WTC11 (cell line): ENCODE measurements at regions of chr17 and their contacts with region 1.

Region 1: DNA sequence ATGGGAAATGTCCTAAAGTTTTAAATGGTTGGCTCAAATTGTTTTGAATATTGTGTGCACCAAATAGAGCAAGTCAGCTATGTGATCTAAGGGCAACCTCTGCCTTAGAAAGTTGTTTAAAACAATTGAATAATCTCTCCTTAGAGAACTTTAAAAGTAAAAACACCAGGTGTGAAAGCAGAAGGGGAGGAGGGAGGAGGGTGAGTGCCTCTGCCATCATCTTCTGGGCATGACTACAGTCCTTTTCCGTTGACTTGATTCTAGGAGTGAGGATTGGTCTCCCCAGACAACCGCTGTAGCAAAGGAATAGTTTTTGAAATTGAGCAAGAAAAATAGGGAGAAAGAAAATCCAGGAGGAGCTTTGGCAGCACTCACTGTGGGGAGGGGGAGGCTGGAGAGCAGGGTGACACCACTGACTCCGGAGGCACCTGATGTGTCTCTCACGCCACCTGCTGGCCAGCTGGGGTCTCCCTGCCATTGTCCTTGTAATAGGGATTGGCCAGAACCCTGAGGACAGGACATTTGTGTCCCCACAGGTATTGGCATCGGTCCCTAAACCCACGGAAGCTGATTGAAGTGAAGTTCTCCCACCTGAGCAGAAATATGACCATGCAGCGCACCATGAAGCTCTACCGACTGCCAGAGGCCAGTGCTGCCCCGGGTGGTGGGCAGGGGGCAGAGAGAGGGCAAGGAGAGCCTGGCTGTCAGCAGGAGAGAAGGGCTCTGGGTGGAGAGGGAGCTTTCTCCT is 33.3 kb downstream of the PLCD3 start:
- DNase-seq: peak; percentile 94
- ATAC-seq: peak; percentile 96
- H3K4me3 Mint-ChIP-seq: no peak overlapping the region
- H3K27ac Mint-ChIP-seq: peak overlapping the region; percentile 87
- H3K4me1 Mint-ChIP-seq: no peaks in the 10 kb centered on the region
- H3K27me3 Mint-ChIP-seq: no peaks in the 10 kb centered on the region
- CTCF ChIP-seq: peak; percentile 82

Region 2: DNA sequence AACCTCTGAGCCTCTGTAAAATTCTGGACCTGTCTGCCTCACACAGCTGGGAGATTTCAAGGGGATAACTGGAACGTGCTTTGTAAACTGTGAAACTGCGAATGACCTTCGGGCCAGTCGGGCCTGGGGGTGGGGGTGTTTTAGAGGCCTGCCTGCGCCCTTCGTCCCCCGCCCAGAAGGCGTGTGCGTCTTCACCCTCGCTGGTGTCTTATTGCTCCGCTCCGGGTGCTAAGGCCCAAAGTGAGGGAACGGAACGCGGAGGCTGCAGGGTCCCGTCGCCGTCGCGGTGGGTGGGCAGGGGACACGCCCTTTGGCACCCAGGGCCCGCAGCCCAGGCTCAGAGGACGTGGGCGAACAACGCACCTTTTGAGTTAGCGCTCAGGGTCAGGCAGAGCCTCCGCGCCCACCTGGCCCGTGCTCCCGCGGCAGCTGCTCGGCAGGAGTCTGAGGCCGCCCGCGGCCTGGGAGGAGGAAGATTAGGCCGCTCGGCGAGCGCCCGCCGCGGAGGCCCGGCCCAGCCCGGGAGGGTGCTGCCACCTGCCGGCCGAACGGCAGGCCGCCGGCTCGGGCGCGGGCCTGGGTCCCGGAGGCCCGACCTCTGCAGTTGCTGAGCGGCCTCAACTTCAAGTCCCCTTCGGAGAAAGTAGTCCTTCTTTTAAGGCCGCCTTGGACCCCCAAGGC is 77.3 kb before region 1 on chr17:
- CTCF ChIA-PET with region 1: interaction called, 18 read pairs
- POLR2A ChIA-PET with region 1: no interaction called
- DNase-seq: peak; percentile 72
- ATAC-seq: peak; percentile 62
- H3K4me3 Mint-ChIP-seq: peak overlapping the region; percentile 66
- H3K27ac Mint-ChIP-seq: no peak overlapping the region
- H3K4me1 Mint-ChIP-seq: peaks cover 28% of the 10 kb centered on the region
- H3K27me3 Mint-ChIP-seq: peaks cover 42% of the 10 kb centered on the region
- CTCF ChIP-seq: peak; percentile 85

Region 3: GRCh38 chr17:45087504-45087975 is 11.5 kb before region 1 on chr17:
- CTCF ChIA-PET with region 1: interaction called, 28 read pairs
- POLR2A ChIA-PET with region 1: no interaction called
- DNase-seq: no peak
- ATAC-seq: no peak
- H3K4me3 Mint-ChIP-seq: no peak overlapping the region
- H3K27ac Mint-ChIP-seq: no peak overlapping the region
- H3K4me1 Mint-ChIP-seq: peaks cover 7% of the 10 kb centered on the region
- H3K27me3 Mint-ChIP-seq: no peaks in the 10 kb centered on the region
- CTCF ChIP-seq: no peak

Region 4: DNA sequence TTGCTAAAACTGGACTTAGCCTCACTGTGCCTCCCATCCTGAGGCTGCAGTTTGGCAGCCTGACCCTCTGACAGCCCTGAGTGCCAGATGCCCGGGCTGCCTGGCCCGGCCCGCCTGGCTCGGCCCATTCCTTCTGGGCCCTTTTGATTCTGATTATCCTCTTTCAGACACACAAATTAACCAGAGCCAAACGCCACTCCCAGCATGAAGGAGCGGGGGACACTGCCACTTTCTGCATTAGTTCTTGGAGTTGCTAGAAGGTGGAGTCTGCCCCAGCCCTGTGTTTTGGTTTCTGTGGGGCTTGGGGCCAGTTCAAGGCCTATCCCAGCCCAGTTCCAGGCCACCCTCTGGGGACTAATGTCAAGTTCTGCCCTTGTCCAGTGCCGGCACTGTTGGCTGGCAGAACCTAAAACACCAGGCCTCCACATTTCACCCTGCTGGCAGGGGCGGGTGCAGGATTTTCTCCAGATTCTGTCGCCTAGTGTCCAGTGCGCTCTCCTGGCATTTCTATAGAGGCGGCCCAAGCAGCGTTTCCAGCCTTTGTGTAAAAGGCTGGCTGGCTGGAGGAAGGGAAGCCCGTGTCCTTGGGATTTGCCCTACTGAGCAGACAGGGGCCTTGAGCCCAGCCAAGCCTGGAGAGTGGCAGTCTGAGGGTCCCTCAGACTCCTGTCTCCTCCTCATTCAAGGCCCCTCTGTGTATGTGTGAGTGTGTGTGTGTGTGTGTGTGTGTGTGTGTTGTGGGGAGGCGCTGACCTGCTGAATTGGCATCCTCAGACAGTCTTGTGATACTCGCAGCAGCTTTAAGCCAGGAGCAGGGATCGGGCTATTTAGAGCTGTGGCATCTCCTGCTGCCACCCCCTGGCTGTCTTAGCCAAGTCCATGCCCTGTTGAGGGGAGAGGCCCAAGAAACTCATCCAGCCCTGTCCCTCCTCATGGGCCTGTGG is 11.9 kb after region 1 on chr17:
- CTCF ChIA-PET with region 1: interaction called, 25 read pairs
- POLR2A ChIA-PET with region 1: interaction called, 3 read pairs
- DNase-seq: no peak
- ATAC-seq: 0 out of 2 replicates have a peak, but pooled peaks have one; percentile 11
- H3K4me3 Mint-ChIP-seq: no peak overlapping the region
- H3K27ac Mint-ChIP-seq: peak overlapping the region; percentile 63
- H3K4me1 Mint-ChIP-seq: peaks cover 8% of the 10 kb centered on the region
- H3K27me3 Mint-ChIP-seq: no peaks in the 10 kb centered on the region
- CTCF ChIP-seq: no peak

Region 5: DNA sequence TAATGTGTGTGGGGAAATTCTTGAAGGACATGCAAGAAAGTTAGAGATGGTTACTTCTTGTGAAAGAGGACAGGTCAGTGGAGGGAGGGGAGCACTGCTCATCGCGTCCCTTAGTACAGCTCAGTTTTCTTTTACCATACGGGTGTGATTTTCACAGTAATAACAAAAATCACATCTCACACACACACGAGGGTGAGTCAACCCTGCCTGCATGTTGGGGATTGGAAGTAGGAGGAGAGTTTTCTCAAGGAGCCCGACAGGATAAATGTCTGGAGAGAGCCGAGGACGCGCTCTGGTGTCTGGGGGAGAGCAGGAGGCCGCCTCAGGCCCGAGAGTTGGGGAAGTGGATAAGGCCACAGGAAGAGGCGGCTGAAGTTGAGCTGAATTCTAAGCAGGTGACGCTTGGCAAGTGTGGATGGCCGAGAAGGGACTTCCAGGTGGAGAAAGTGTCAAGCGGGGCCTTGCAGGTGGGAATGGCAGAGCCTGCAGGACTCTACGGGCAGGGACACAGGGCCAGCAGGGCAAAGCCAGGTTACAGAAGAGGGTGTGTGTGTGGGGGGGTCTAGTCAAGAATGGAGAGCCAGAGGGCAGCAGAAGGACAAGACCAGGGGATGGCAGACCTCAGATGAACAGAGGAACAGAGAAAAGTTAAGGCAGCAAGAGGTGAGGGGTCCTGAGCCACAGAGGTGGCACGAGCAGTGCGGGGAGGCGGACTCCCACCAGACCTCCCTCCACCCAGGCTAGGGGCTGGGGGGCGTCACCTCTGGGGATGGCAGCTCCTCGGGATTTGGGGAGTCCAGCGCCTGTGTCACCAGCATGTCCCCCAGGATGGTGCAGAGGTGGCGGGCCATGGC is 17.1 kb after region 1 on chr17:
- CTCF ChIA-PET with region 1: interaction called, 16 read pairs
- POLR2A ChIA-PET with region 1: no interaction called
- DNase-seq: no peak
- ATAC-seq: no peak
- H3K4me3 Mint-ChIP-seq: no peak overlapping the region
- H3K27ac Mint-ChIP-seq: peak overlapping the region; percentile 66; the same call in 1 of the 2 replicates
- H3K4me1 Mint-ChIP-seq: peaks cover 14% of the 10 kb centered on the region
- H3K27me3 Mint-ChIP-seq: no peaks in the 10 kb centered on the region
- CTCF ChIP-seq: no peak